Endothelial cell of umbilical vein (primary cell): ENCODE measurements at regions of chr15 and their contacts with region 1.

Region 1: DNA sequence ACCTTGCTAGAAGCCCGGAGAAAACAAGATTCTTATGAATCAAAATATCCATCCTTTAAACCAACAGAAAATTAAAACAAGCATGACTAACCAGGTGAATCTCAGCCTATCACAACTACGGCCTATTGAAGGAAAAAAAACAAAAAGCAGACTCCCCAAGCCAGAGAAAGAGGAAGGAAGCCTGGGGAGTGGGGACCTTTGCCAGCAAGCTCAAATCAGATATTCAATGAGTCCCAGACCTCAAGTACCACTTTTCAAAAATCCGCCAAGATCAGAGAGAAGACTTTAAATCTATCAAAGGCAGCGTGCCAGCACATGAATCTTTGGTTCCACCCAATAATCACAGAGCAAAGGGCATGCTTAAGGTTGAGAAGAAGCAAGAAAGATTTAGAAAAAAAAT is 253.8 kb downstream of the NTRK3 start:
- DNase-seq: no peak
- H3K4me3 ChIP-seq: no peak overlapping the region
- H3K27ac ChIP-seq: no peak overlapping the region
- H3K4me1 ChIP-seq: no peaks in the 10 kb centered on the region
- H3K27me3 ChIP-seq: no peaks in the 10 kb centered on the region
- CTCF ChIP-seq: no peak
- POLR2A ChIP-seq: no peak

Region 2: DNA sequence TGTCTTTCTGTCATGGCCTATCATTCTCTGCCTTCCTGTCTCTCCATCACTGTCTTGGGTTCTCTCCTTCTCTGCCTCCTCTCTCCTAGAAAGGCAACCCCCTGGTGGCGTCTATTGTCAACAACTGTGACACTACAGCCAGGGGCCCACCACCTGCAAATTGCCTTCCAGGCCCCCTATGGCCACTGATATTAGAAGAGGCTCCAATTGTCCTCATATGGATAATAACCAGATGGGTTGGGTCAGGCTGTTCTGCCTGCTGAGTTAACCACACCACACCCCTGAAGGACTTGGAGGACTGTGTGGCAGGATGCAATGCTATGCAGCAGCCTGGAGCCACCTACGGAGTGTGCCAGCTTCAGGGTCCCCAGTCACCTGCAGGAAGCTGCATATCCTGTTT is 411.1 kb before region 1 on chr15:
- CTCF ChIA-PET with region 1: no interaction called
- POLR2A ChIA-PET with region 1: interaction called, 11 read pairs
- dilution Hi-C with region 1: no loop called
- intact Hi-C with region 1: no loop called
- DNase-seq: no peak
- H3K4me3 ChIP-seq: no peak overlapping the region
- H3K27ac ChIP-seq: no peak overlapping the region
- H3K4me1 ChIP-seq: peaks cover 13% of the 10 kb centered on the region
- H3K27me3 ChIP-seq: no peaks in the 10 kb centered on the region
- CTCF ChIP-seq: no peak
- POLR2A ChIP-seq: no peak